Activated naive CD4-positive, alpha-beta T cell treated with anti-CD3 and anti-CD28 coated beads for 36 hours (primary cell): ENCODE measurements at regions of chr4 and their contacts with region 1.

Region 1: GRCh38 chr4:184282251-184282713 is 64.6 kb upstream of the ENPP6 start:
- DNase-seq: peak; percentile 82
- H3K4me3 Mint-ChIP-seq: no peak overlapping the region
- H3K27ac Mint-ChIP-seq: peak overlapping the region; percentile 85
- H3K4me1 Mint-ChIP-seq: peaks cover 64% of the 10 kb centered on the region
- H3K27me3 Mint-ChIP-seq: peaks cover 4% of the 10 kb centered on the region

Region 2: GRCh38 chr4:184215709-184216328 is 66.5 kb before region 1 on chr4:
- CTCF ChIA-PET with region 1: no interaction called
- intact Hi-C with region 1: no loop called
- DNase-seq: no peak
- H3K4me3 Mint-ChIP-seq: no peak overlapping the region
- H3K27ac Mint-ChIP-seq: no peak overlapping the region
- H3K4me1 Mint-ChIP-seq: no peaks in the 10 kb centered on the region
- H3K27me3 Mint-ChIP-seq: peaks cover 7% of the 10 kb centered on the region

Region 3: GRCh38 chr4:184318852-184319251 is 36.6 kb after region 1 on chr4:
- CTCF ChIA-PET with region 1: interaction called, 6 read pairs
- intact Hi-C with region 1: loop called (anchors 1 kb)
- DNase-seq: no peak
- H3K4me3 Mint-ChIP-seq: no peak overlapping the region
- H3K27ac Mint-ChIP-seq: no peak overlapping the region
- H3K4me1 Mint-ChIP-seq: peaks cover 36% of the 10 kb centered on the region
- H3K27me3 Mint-ChIP-seq: peaks cover 2% of the 10 kb centered on the region

Region 4: DNA sequence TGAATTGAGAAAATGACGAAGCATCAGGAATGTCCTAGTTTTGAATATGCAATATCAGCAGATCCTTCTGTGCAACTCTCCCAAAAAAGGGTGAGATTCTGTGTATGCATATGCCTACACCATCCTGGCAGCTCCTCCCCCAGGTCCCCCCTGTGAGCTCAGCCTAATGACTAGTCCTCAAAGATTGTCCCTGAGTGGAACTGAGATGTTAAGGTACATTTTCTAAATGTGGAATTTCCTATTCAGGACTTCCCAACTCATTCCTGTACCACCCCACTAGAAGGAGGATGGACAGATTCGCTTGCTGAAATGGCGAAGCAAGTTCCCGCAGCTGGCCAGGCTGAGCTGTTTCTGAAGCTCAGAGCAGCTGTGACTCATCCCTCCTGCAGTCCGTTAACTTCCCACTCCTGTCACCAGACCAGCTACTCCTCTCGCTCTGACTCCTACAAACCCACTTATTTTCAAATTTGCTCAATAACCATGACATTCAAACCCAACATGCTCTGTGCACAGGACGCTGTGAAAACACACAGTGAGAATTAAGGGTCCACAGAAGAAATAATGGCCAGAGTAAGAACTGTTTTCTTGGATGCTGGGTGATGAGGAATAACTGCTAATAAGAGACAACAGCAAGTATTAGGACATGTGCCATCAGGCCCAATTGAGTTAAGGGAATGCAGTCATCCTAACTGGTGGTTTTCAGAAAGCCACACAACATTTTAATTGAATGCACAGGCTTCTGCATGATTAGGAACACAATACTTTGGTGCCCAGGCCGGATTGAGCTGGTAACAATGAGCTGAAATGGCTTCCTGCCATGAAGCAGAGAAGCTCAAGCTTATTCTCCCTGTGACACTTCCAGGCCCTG is 232.1 kb after region 1 on chr4:
- CTCF ChIA-PET with region 1: interaction called, 10 read pairs
- intact Hi-C with region 1: no loop called
- DNase-seq: peak; percentile 86
- H3K4me3 Mint-ChIP-seq: peak overlapping the region; percentile 23
- H3K27ac Mint-ChIP-seq: peak overlapping the region; percentile 66
- H3K4me1 Mint-ChIP-seq: peaks cover 35% of the 10 kb centered on the region
- H3K27me3 Mint-ChIP-seq: no peaks in the 10 kb centered on the region

Region 5: GRCh38 chr4:184583738-184584502 is 301.6 kb after region 1 on chr4:
- CTCF ChIA-PET with region 1: no interaction called
- intact Hi-C with region 1: loop called (anchors 2 kb)
- DNase-seq: peak; percentile 62
- H3K4me3 Mint-ChIP-seq: no peak overlapping the region
- H3K27ac Mint-ChIP-seq: peak overlapping the region; percentile 20
- H3K4me1 Mint-ChIP-seq: peaks cover 25% of the 10 kb centered on the region
- H3K27me3 Mint-ChIP-seq: no peaks in the 10 kb centered on the region

Region 6: DNA sequence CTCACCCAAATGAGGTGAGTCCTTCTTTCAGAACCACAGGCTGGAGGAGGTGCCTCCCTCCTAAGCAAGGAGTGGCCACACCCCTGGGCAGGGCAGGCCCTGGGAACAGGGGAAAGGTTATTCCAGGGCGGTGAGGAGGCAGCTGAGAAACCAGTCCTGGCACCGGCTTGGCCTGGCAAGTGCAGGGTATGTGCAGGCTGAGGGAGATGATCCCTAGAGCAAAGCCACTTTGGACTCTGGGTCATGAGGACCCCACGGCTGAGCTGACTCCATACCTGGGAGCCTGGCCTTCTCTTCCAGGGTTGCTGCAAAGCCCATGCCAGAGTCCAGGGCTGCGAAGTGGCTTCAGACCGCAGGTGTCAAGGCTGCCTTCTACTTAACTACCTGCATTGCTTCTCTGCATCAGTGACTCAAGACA is 686.5 kb after region 1 on chr4:
- CTCF ChIA-PET with region 1: no interaction called
- intact Hi-C with region 1: loop called (anchors 10 kb)
- DNase-seq: no peak
- H3K4me3 Mint-ChIP-seq: no peak overlapping the region
- H3K27ac Mint-ChIP-seq: no peak overlapping the region
- H3K4me1 Mint-ChIP-seq: peaks cover 6% of the 10 kb centered on the region
- H3K27me3 Mint-ChIP-seq: no peaks in the 10 kb centered on the region